AG04450 (cell line): ENCODE measurements at regions of chr14 and their contacts with region 1.

Region 1: GRCh38 chr14:54566410-54567223 is at the start of gene SAMD4A:
- DNase-seq: peak; percentile 71
- H3K4me3 ChIP-seq: peak within 1 kb of the TSS; percentile 80
- H3K27ac ChIP-seq: peak within 1 kb of the TSS; percentile 86
- H3K27me3 ChIP-seq: no peaks in the 10 kb centered on the region
- CTCF ChIP-seq: peak; percentile 46
- polyA plus RNA-seq, gene SAMD4A: 12.7 and 21.0 TPM in 2 replicates

Region 2: GRCh38 chr14:53778263-53778662 is 788.4 kb before region 1 on chr14:
- CTCF ChIA-PET with region 1: no interaction called
- POLR2A ChIA-PET with region 1: no interaction called
- DNase-seq: no peak
- H3K4me3 ChIP-seq: no peak overlapping the region
- H3K27ac ChIP-seq: no peak overlapping the region
- H3K27me3 ChIP-seq: peaks cover 3% of the 10 kb centered on the region
- CTCF ChIP-seq: no peak

Region 3: GRCh38 chr14:54435500-54435981 is 131.1 kb before region 1 on chr14:
- CTCF ChIA-PET with region 1: no interaction called
- POLR2A ChIA-PET with region 1: no interaction called
- DNase-seq: no peak
- H3K4me3 ChIP-seq: no peak overlapping the region
- H3K27ac ChIP-seq: no peak overlapping the region
- H3K27me3 ChIP-seq: no peaks in the 10 kb centered on the region
- CTCF ChIP-seq: no peak

Region 4: DNA sequence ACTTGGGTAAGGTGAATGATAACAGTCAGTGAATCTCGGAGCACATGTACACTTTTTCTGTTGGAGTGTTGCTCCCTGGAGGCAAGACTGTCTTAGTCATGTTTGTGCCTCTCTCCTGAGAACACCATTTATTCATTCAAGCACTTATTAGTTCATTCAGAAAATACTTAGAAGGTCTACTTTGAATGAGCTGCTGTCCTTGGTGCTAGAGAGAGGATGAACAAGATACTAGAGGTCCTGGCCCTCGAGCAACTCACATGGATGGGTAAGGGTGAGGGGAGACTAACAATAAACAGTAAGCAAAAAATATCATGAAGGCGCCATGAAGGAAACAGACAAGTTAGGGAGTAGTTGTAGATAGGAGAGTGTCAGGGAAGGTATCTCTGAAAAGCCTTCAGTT is 16.8 kb before region 1 on chr14:
- CTCF ChIA-PET with region 1: interaction called, 15 read pairs
- POLR2A ChIA-PET with region 1: no interaction called
- DNase-seq: no peak
- H3K4me3 ChIP-seq: no peak overlapping the region
- H3K27ac ChIP-seq: no peak overlapping the region
- H3K27me3 ChIP-seq: no peaks in the 10 kb centered on the region
- CTCF ChIP-seq: no peak

Region 5: GRCh38 chr14:54652188-54652587 is 85.6 kb after region 1 on chr14:
- CTCF ChIA-PET with region 1: interaction called, 11 read pairs
- POLR2A ChIA-PET with region 1: interaction called, 27 read pairs
- DNase-seq: peak; percentile 99
- H3K4me3 ChIP-seq: peak overlapping the region; percentile 47
- H3K27ac ChIP-seq: peak overlapping the region; percentile 95
- H3K27me3 ChIP-seq: no peaks in the 10 kb centered on the region
- CTCF ChIP-seq: no peak

Region 6: GRCh38 chr14:54691525-54692283 is 125.1 kb after region 1 on chr14:
- CTCF ChIA-PET with region 1: interaction called, 99 read pairs
- POLR2A ChIA-PET with region 1: interaction called, 26 read pairs
- DNase-seq: no peak
- H3K4me3 ChIP-seq: no peak overlapping the region
- H3K27ac ChIP-seq: no peak overlapping the region
- H3K27me3 ChIP-seq: no peaks in the 10 kb centered on the region
- CTCF ChIP-seq: peak; percentile 96

Region 7: DNA sequence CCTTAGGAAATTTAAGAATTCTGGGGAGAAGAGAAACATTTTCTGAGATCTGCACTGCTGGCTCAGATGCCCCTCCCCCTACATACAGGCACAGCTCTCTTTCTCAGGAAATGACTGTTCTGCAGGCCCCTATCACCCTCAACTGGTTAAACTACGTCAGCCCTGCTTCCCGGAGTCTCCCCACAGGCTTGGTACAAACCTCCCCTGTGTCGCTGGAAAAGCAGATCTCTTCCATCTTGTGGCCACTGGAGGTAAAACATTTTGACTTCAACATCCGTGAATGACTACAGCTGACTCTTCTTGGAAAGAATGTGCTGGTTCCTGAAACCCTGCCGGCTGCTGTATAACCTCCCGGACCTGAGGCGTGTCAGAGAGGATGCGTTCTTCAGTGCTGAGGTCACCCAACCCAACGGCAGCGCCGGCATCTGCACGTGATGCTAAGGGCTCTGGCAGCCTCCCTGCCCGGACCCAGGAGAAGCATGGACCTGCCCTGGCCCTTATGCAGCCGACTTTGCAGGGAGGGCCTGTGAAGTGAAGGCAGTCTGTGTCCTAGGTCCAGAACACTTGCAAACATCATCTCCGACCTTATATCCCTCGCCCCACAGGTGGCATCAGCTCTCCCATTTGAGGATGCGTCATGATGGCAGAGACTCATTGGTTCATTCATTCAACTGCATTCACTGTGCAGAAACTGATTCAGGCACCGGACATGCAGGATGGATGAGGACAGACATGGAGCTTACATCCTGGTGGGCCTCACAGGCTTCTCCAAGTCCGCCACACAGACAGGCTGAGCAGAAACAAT is 206.8 kb after region 1 on chr14:
- CTCF ChIA-PET with region 1: interaction called, 186 read pairs
- POLR2A ChIA-PET with region 1: interaction called, 61 read pairs
- DNase-seq: peak; percentile 99
- H3K4me3 ChIP-seq: peak overlapping the region; percentile 37
- H3K27ac ChIP-seq: peak overlapping the region; percentile 100
- H3K27me3 ChIP-seq: no peaks in the 10 kb centered on the region
- CTCF ChIP-seq: peak; percentile 75

Region 8: GRCh38 chr14:54805521-54806322 is 239.1 kb after region 1 on chr14:
- CTCF ChIA-PET with region 1: interaction called, 90 read pairs
- POLR2A ChIA-PET with region 1: interaction called, 3 read pairs
- DNase-seq: peak; percentile 65
- H3K4me3 ChIP-seq: peak overlapping the region; percentile 18
- H3K27ac ChIP-seq: no peak overlapping the region
- H3K27me3 ChIP-seq: peaks cover 5% of the 10 kb centered on the region
- CTCF ChIP-seq: peak; percentile 99

Region 9: DNA sequence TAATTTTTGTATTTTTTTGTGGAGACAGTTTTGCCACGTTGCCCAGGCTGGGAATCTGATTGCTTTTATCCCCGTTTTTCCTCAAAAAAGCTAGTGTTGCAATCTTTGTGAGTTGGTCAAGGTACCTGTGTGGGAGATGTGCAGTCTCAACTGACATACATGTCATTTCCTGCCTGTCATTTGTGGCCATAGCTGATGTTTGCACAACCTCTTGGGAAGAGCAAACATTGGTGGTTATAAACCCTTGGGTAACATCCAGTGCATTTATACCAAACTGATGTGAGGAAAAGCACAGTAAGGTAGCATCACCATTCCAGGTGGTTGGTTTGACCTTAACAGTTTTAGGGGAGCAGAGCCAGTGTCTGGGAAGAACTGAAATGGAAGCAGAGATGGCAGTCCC is 790.3 kb after region 1 on chr14:
- CTCF ChIA-PET with region 1: no interaction called
- POLR2A ChIA-PET with region 1: no interaction called
- DNase-seq: no peak
- H3K4me3 ChIP-seq: no peak overlapping the region
- H3K27ac ChIP-seq: no peak overlapping the region
- H3K27me3 ChIP-seq: no peaks in the 10 kb centered on the region
- CTCF ChIP-seq: no peak